ENCODE measurements at regions of chr18 and their contacts with region 1.

Region 1: DNA sequence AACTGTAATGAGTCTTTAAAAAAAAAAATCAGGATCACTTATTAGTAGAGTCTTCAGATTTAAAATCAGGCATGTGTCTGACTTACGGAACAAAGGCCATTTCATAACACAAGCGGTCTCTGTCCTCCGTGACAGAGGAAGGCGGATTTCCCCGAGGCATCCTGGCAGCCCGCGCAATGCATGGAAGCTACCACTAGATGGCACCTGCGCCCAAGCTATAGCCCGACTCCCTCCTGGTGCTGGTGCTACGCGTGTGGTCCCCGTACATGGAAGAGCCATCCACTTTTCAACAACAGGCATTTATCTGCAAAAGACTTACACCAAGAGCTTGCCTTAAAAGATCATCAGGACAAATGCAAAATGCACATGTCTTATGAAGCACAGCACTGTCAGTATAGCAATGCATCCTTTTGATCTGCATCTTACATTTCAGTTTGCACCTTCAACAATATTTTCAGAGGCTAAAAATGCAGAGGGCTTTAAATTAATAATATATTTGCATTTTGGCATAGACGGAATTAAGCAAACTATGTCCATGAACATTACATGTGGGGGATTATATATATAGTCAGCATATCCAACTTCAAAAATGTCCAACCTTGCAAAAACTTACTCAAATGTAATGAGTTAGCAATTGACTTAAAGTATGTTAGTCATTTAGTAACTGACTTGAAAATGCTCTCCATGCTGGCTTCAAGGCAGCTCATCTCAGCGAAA is 96.0 kb downstream of the ZNF516 start:
- DNase-seq: peak; percentile 74 to 89 (median 81)
- H3K4me3 ChIP-seq: no peak overlapping the region
- H3K4me3 Mint-ChIP-seq: no peak overlapping the region
- H3K27ac ChIP-seq: peak overlapping the region in 1 of 2 donors; percentile 57
- H3K27ac Mint-ChIP-seq: peak overlapping the region; percentile 20 to 91 (median 82)
- H3K4me1 ChIP-seq: peaks cover 43 to 55% of the 10 kb centered on the region in 2 donors
- H3K4me1 Mint-ChIP-seq: peaks cover 61% of the 10 kb centered on the region
- H3K27me3 ChIP-seq: no peaks in the 10 kb centered on the region
- H3K27me3 Mint-ChIP-seq: peaks cover 0 to 2% (median 0%) of the 10 kb centered on the region in 3 donors
- CTCF ChIP-seq: peak; percentile 96

Region 2: GRCh38 chr18:76153691-76154090 is 245.4 kb before region 1 on chr18:
- intact Hi-C with region 1: no loop called
- DNase-seq: no peak
- H3K4me3 ChIP-seq: no peak overlapping the region
- H3K4me3 Mint-ChIP-seq: no peak overlapping the region
- H3K27ac ChIP-seq: no peak overlapping the region
- H3K27ac Mint-ChIP-seq: no peak overlapping the region
- H3K4me1 ChIP-seq: no peaks in the 10 kb centered on the region
- H3K4me1 Mint-ChIP-seq: no peaks in the 10 kb centered on the region
- H3K27me3 ChIP-seq: no peaks in the 10 kb centered on the region
- H3K27me3 Mint-ChIP-seq: peaks cover 0 to 4% (median 1%) of the 10 kb centered on the region in 3 donors
- CTCF ChIP-seq: no peak

Region 3: DNA sequence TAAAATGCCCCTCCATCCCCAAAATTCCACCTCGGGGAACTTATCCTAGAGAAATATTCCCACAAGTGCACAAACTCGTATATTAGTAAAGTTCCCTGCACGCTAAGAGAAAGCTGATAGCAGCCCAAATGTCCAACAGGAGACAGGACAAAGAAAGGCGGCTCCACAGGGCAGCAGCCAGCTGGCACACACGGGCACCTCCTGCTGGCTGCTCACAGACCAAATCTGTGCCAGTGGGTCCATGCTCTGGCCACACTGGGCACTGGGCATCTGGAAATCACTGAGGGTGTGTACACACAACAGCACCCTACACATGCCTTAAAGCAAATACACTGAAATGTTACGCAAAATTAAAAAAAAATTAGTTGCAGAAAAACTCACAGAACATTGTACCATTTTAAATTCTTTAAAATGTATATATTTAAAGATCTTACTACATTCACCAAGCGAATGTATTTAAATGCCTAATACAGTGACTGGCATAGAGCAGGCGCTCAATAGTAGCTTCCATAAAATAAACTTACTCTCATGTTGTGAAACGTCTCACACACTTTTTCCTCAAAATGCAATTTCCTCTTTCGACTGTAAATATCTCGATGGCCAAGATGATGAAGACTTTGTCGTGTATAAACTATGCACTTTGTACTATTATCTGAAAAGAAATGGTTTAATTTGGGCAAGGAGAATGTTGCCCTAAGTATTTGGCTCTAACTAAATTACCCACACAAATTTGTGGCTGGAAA is 76.6 kb after region 1 on chr18:
- intact Hi-C with region 1: loop called (anchors 5 kb)
- DNase-seq: peak in 2 of 3 donors; percentile 57 to 77
- H3K4me3 ChIP-seq: peak overlapping the region in 1 of 3 experiments; percentile 57
- H3K4me3 Mint-ChIP-seq: peak overlapping the region in 1 of 2 donors; percentile 72
- H3K27ac ChIP-seq: peak overlapping the region; percentile 74 to 76
- H3K27ac Mint-ChIP-seq: peak overlapping the region; percentile 63 to 93 (median 87)
- H3K4me1 ChIP-seq: peaks cover 88 to 99% of the 10 kb centered on the region in 2 donors
- H3K4me1 Mint-ChIP-seq: peaks cover 92% of the 10 kb centered on the region
- H3K27me3 ChIP-seq: no peaks in the 10 kb centered on the region
- H3K27me3 Mint-ChIP-seq: no peaks in the 10 kb centered on the region
- CTCF ChIP-seq: no peak

Region 4: GRCh38 chr18:76480913-76481312 is 81.9 kb after region 1 on chr18:
- intact Hi-C with region 1: loop called in 1 of 2 experiments (anchors 5 kb)
- DNase-seq: no peak
- H3K4me3 ChIP-seq: no peak overlapping the region
- H3K4me3 Mint-ChIP-seq: no peak overlapping the region
- H3K27ac ChIP-seq: peak overlapping the region; percentile 7 to 43
- H3K27ac Mint-ChIP-seq: peak overlapping the region; percentile 5 to 77 (median 31)
- H3K4me1 ChIP-seq: peaks cover 87 to 99% of the 10 kb centered on the region in 2 donors
- H3K4me1 Mint-ChIP-seq: peaks cover 94% of the 10 kb centered on the region
- H3K27me3 ChIP-seq: no peaks in the 10 kb centered on the region
- H3K27me3 Mint-ChIP-seq: no peaks in the 10 kb centered on the region
- CTCF ChIP-seq: peak; percentile 47

Region 5: DNA sequence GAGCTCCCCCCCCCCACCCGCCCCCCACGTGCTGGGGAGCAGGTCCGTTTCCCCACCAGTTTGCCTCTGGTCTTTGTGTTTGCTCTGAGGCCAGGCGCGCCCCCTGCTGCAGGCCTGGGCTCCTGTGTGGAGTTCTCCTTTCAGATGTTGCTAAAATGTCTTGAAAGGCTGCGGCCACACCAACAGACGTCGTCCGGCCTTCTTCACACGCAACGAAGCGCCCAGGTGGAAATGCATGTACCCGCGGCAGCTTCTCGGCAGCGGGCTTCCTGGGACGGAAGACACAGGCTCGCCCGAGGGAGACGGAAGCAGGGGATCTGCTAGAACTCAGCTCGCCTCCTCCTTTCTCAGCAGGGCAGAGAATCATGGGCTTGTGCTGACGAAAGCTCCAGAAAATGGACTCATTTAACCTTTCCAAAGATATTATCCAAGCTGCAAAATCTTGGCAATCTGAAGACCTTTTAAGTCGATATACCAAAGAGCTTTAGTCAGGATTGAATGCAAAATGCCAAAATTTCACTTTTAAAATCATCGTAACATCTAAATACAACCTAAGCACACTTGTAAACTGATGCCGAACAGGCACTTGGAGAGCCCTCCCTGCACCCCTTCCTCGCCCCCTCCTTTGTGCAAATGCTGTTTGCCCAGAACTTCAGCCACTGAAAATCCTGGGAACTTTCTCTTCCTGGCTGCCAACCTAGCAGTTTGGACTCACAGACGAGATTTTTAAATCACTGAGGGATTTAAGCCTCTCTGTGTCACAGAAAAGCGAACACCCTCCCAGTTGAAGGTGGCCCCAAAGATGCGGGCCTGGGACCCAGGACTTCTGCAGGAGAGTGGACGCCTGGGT is 221.5 kb after region 1 on chr18:
- intact Hi-C with region 1: loop called (anchors 5 kb)
- DNase-seq: peak; percentile 68 to 78 (median 74)
- H3K4me3 ChIP-seq: peak overlapping the region; percentile 40 to 73 (median 61)
- H3K4me3 Mint-ChIP-seq: peak overlapping the region; percentile 77 to 93
- H3K27ac ChIP-seq: peak overlapping the region; percentile 37 to 65
- H3K27ac Mint-ChIP-seq: peak overlapping the region; percentile 42 to 90 (median 72)
- H3K4me1 ChIP-seq: peaks cover 36 to 37% of the 10 kb centered on the region in 2 donors
- H3K4me1 Mint-ChIP-seq: peaks cover 35% of the 10 kb centered on the region
- H3K27me3 ChIP-seq: no peaks in the 10 kb centered on the region
- H3K27me3 Mint-ChIP-seq: peaks cover 0 to 1% (median 0%) of the 10 kb centered on the region in 3 donors
- CTCF ChIP-seq: peak; percentile 83

Region 6: DNA sequence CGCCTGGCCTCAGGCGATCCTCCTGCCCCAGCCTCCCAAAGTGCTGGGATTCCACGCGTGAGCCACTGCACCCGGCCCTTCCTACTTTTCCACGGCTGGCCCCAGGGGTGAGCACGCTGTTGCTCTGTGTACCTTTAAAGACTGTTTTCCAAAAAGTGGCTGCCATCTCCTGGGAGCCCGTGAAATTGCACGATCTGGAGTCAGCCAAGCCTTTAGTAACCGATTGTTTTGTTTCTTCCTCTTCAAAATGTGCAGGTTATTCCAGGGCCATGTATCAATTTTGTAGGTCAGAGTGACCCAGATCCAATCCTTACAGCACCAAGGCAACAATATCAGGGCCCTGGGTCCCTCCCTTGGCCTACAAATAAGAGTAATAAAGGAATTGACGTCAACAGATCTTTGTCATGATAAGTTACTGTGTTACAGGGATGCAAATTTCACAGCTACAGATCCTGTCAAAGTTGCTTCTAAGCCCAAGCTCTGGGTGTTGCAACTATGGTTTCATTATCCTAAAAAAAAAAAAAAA is 287.7 kb after region 1 on chr18:
- intact Hi-C with region 1: loop called (anchors 5 kb)
- DNase-seq: peak; percentile 33 to 69 (median 50)
- H3K4me3 ChIP-seq: no peak overlapping the region
- H3K4me3 Mint-ChIP-seq: no peak overlapping the region
- H3K27ac ChIP-seq: peak overlapping the region in 1 of 2 donors; percentile 82
- H3K27ac Mint-ChIP-seq: peak overlapping the region in 2 of 7 donors; percentile 13 to 29
- H3K4me1 ChIP-seq: peaks cover 0 to 38% of the 10 kb centered on the region in 2 donors
- H3K4me1 Mint-ChIP-seq: peaks cover 14% of the 10 kb centered on the region
- H3K27me3 ChIP-seq: peaks cover 0 to 9% of the 10 kb centered on the region in 2 donors
- H3K27me3 Mint-ChIP-seq: peaks cover 10 to 31% (median 19%) of the 10 kb centered on the region in 3 donors
- CTCF ChIP-seq: peak; percentile 69

Region 7: GRCh38 chr18:76709659-76710645 is 310.9 kb after region 1 on chr18:
- intact Hi-C with region 1: loop called (anchors 2 kb)
- DNase-seq: peak; percentile 63 to 70 (median 69)
- H3K4me3 ChIP-seq: no peak overlapping the region
- H3K4me3 Mint-ChIP-seq: peak overlapping the region in 1 of 2 donors; percentile 63
- H3K27ac ChIP-seq: no peak overlapping the region
- H3K27ac Mint-ChIP-seq: no peak overlapping the region
- H3K4me1 ChIP-seq: peaks cover 3 to 4% of the 10 kb centered on the region in 2 donors
- H3K4me1 Mint-ChIP-seq: peaks cover 7% of the 10 kb centered on the region
- H3K27me3 ChIP-seq: no peaks in the 10 kb centered on the region
- H3K27me3 Mint-ChIP-seq: peaks cover 1 to 2% (median 2%) of the 10 kb centered on the region in 3 donors
- CTCF ChIP-seq: peak; percentile 91